Activated T-helper 1 cell treated with anti-CD3 and anti-CD28 coated beads, Interleukin-12 subunit alpha, Interleukin-12 subunit beta, Interleukin-2, Interleukin-4 antibody, amounts not matched to agents 30 ng/mL and 10 ng/mL and 1 ng/mL, durations not matched to agents 14 hours and 24 hours and 36 hours (primary cell): ENCODE measurements at regions of chr1 and their contacts with region 1.

Region 1: GRCh38 chr1:45686317-45687013 is at the start of gene GPBP1L1:
- DNase-seq: peak; percentile 96
- H3K4me3 Mint-ChIP-seq: peak within 1 kb of the TSS; percentile 99
- H3K27ac Mint-ChIP-seq: peak within 1 kb of the TSS; percentile 99
- H3K4me1 Mint-ChIP-seq: peaks cover 31% of the 10 kb centered on the region
- H3K27me3 Mint-ChIP-seq: no peaks in the 10 kb centered on the region
- total RNA-seq, gene GPBP1L1: 99.3 and 109 TPM in 2 replicates

Region 2: GRCh38 chr1:44314452-44314851 is 1372.0 kb before region 1 on chr1:
- intact Hi-C with region 1: no loop called
- DNase-seq: no peak
- H3K4me3 Mint-ChIP-seq: no peak overlapping the region
- H3K27ac Mint-ChIP-seq: no peak overlapping the region
- H3K4me1 Mint-ChIP-seq: peaks cover 54% of the 10 kb centered on the region
- H3K27me3 Mint-ChIP-seq: no peaks in the 10 kb centered on the region

Region 3: GRCh38 chr1:44739361-44740178 is 946.9 kb before region 1 on chr1 and contains the start of gene KIF2C:
- intact Hi-C with region 1: loop called (anchors 5 kb)
- DNase-seq: peak; percentile 95
- H3K4me3 Mint-ChIP-seq: peak within 1 kb of the TSS; percentile 92
- H3K27ac Mint-ChIP-seq: peak within 1 kb of the TSS; percentile 90
- H3K4me1 Mint-ChIP-seq: peaks cover 37% of the 10 kb centered on the region
- H3K27me3 Mint-ChIP-seq: no peaks in the 10 kb centered on the region
- total RNA-seq, gene KIF2C: 68.7 and 72.9 TPM in 2 replicates

Region 4: DNA sequence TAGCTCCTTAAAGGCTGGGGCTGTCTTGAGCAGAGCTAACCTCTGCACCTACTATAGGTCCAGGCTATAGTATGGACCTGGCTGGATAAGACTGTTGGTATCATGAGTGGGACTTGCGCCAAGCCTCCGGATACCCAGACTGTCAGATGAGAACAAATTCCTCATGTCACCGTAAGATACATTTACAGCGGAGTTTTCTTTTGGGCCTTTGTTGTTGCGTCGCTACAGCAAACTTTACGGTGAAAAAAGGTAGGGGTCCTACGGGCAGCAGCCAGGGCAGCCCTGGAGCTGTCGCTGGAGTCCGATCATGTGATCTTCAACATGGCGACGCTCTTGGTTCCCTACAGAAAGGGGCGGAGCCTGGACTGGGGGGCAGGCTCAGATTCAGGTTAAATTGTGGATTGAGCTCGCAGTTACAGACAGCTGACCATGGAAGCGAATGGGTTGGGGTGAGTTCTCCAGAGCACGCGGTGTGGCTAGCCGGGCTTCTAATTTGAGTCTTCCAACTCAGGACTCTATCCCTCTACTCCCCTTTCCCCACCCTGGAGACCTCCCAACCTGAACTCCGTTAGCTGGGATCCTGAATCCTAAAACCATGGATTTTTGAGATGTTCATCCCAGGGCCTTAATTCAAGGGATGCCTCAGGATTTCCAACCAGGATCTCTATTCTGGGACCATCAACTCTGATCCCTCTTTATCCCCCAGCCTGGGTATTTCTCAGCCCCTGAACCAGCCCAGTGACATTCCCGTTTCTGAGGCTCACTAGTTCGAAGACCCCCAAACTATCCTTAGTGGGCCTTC is 674.4 kb before region 1 on chr1 and contains the start of gene UROD:
- intact Hi-C with region 1: loop called (anchors 1 kb)
- DNase-seq: peak; percentile 86
- H3K4me3 Mint-ChIP-seq: peak within 1 kb of the TSS; percentile 84
- H3K27ac Mint-ChIP-seq: peak within 1 kb of the TSS; percentile 90
- H3K4me1 Mint-ChIP-seq: peaks cover 58% of the 10 kb centered on the region
- H3K27me3 Mint-ChIP-seq: no peaks in the 10 kb centered on the region
- total RNA-seq, gene UROD: 79.9 and 81.9 TPM in 2 replicates

Region 5: DNA sequence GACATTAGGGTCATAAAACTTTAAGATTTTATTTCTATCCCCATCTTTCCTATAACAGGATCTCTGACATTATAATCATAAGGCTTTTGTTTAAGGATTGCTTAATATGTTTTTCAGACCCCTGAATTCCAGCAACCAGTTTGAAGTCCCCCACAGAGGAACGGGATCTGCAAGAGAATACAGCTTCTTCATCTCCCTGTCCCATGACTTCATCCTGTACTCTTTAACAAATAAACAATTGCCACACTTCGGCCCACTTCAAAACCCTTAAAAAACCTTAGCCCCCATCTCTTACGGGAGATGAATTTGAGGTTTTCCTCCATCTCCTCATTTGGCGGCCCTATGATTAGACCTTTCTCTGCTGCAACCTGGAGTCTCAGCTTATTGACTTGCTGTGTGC is 231.3 kb before region 1 on chr1:
- intact Hi-C with region 1: no loop called
- DNase-seq: no peak
- H3K4me3 Mint-ChIP-seq: no peak overlapping the region
- H3K27ac Mint-ChIP-seq: no peak overlapping the region
- H3K4me1 Mint-ChIP-seq: no peaks in the 10 kb centered on the region
- H3K27me3 Mint-ChIP-seq: no peaks in the 10 kb centered on the region

Region 6: DNA sequence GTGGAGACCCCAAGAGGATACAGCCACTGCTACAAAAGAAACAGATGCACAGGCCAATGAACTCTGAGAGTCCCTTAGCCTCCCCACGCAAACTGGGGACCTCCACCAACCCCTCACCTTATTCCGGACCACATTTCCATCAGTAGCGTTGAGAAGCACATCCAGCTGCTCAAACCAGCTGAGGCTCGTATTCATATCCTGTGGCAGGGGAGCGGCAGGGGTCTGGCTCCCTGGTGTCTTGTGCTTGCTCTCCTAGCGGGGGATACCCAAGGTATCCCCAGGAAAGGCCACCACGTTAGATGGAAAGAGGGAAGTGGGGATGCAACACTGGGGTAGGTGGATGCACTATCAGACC is 187.1 kb before region 1 on chr1:
- intact Hi-C with region 1: loop called (anchors 1 kb)
- DNase-seq: no peak
- H3K4me3 Mint-ChIP-seq: peak overlapping the region; percentile 93
- H3K27ac Mint-ChIP-seq: peak overlapping the region; percentile 83
- H3K4me1 Mint-ChIP-seq: peaks cover 37% of the 10 kb centered on the region
- H3K27me3 Mint-ChIP-seq: no peaks in the 10 kb centered on the region

Region 7: DNA sequence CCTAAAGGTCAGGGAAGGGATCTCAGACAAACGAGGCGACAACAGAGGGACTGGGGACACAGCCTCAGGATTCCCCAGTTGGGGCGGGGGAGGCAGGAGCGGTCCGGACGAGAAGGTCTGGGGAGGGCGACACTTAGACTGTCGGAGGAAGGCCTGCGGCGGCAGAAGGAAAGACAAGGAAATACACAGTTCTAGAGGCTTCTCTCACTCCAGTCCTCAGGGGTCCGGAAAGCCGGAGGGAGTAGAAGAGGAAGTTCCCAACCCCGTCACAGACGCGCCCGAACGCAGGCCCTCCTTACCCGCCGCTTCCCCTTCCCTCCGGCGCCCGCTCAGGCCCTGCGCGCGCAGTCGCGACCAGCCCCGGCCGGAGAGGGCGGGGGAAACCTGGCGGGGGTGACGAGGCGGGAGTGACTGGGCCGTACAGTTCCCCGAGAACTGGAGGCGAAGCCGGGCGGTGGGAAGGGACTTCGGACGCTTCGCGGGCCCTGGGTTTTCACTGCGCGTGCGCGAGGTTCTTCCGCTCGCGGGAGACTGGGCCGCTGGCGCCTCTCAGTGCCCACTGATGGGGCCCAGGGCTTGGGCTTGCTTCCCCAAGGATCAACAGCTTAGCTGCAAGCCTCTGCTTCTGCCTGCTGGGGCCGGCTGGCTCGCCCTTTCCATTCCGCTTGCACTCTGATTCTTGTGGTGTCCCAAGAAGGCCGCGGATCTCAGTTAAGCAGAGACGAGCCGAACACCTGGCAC is 64.0 kb after region 1 on chr1 and contains the start of gene IPP:
- intact Hi-C with region 1: loop called (anchors 1 kb)
- DNase-seq: peak; percentile 96
- H3K4me3 Mint-ChIP-seq: peak within 1 kb of the TSS; percentile 98
- H3K27ac Mint-ChIP-seq: peak within 1 kb of the TSS; percentile 96
- H3K4me1 Mint-ChIP-seq: peaks cover 10% of the 10 kb centered on the region
- H3K27me3 Mint-ChIP-seq: no peaks in the 10 kb centered on the region
- total RNA-seq, gene IPP: 12.3 and 13.9 TPM in 2 replicates

Region 8: DNA sequence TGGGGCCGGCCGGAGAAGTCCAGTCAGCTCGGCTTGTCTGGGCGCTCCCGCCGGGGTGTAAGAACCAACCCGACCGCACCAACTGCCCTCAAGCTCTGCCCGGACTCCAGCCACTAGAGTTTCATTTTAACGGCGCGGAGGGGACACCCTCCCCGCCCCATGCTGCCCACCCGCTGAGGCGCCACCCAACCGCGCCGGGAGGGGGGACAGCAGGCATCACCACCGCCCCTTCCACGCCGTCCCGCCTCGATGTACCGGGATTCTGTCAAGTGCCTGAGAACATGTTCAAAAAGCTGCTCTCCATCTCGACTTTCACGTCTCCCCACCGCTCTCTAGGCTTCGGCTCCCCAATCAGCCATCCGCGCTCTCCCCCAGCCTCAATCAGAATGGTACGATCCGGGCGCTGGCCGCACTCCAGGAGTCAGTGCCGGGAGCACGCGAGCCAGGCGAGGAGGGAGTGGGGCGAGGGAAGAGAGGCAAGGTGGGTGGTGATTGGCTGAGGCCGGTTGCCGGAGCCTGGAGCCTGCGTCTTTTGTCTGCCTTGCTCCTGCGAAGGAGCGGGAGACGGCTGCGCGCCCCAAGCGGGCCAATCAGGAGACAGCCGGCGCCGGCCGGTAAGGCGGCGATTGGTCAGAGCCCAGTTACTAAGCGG is 446.2 kb after region 1 on chr1 and contains the start of gene PIK3R3:
- intact Hi-C with region 1: loop called (anchors 2 kb)
- DNase-seq: peak; percentile 89
- H3K4me3 Mint-ChIP-seq: peak within 1 kb of the TSS; percentile 96
- H3K27ac Mint-ChIP-seq: peak within 1 kb of the TSS; percentile 98
- H3K4me1 Mint-ChIP-seq: peaks cover 42% of the 10 kb centered on the region
- H3K27me3 Mint-ChIP-seq: peaks cover 64% of the 10 kb centered on the region
- total RNA-seq, gene PIK3R3: 3.6 TPM in 2 replicates

Region 9: GRCh38 chr1:46340404-46341221 is 654.1 kb after region 1 on chr1 and contains the start of gene NSUN4:
- intact Hi-C with region 1: loop called (anchors 2 kb)
- DNase-seq: peak; percentile 83
- H3K4me3 Mint-ChIP-seq: peak within 1 kb of the TSS; percentile 100
- H3K27ac Mint-ChIP-seq: peak within 1 kb of the TSS; percentile 100
- H3K4me1 Mint-ChIP-seq: peaks cover 39% of the 10 kb centered on the region
- H3K27me3 Mint-ChIP-seq: no peaks in the 10 kb centered on the region
- total RNA-seq, gene NSUN4: 37.6 and 39.6 TPM in 2 replicates